Aorta (tissue), 5 donors: ENCODE measurements at regions of chr6 and their contacts with region 1.

Region 1: GRCh38 chr6:154733012-154733625 is at the start of gene SCAF8:
- DNase-seq: peak; percentile 86 to 95
- ATAC-seq: peak; percentile 97
- H3K4me3 ChIP-seq: peak within 1 kb of the TSS; percentile 87 to 94
- H3K27ac ChIP-seq: peak within 1 kb of the TSS; percentile 75 to 84
- H3K4me1 ChIP-seq: no peaks in the 10 kb centered on the region
- H3K27me3 ChIP-seq: no peaks in the 10 kb centered on the region
- total RNA-seq, gene SCAF8: 47.0 to 52.3 TPM

Region 2: DNA sequence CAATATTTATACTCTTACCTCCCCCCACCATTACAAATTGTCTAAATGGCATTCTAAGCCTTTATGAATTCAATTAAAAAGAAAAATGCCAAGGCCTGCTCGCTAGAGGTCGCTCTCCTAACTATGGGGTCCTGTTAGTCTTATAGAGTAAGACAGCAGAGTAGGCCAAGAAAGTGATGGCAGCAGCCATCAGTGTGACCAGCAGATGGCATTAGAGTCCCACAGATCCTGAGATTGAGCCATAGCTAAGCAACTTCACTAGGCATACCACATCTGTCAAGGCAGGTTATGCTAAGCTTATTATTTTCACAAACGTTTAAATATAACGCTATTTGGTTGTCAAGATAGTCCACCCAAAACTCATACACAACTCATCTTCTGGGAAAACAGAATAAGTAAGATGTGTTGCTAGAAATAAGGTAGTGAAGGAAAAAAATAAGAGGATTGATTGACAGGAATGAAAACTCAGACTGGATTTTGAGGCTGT is 57.5 kb before region 1 on chr6:
- intact Hi-C with region 1: loop called (anchors 5 kb)
- DNase-seq: peak; percentile 91 to 92
- ATAC-seq: peak; percentile 97
- H3K4me3 ChIP-seq: no peak overlapping the region
- H3K27ac ChIP-seq: no peak overlapping the region
- H3K4me1 ChIP-seq: no peaks in the 10 kb centered on the region
- H3K27me3 ChIP-seq: no peaks in the 10 kb centered on the region

Region 3: DNA sequence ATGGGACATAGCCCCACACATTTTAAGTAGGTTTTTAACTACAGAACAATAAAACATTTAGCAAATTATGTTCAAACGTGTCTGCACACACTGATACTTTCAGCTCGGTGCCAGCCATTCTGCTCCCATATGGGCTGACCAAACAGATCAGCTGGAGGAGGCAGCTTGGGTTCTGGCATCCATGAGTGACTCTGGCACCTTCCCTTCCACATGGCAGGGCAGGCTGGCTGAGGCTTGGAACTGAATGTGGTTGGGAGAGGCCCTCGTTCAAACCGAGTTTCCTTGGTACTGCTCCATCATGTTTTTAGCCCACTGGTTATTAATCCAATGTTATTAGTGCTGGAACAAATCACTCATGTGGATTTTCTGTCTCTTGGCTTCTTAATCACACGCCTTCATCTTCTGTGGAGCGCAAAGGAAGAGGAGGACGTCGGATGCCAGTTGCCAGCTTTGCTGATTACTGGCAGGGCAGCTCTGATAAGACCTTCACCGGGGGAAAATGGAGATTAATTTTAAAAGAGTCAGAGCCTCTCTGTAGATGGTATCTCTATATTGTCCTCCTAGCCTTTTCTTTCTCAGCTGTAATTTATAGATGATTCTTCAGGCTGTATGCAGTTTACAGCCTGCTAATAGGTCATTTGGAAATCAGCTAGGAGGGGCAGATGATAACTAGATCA is 168.9 kb after region 1 on chr6:
- intact Hi-C with region 1: no loop called
- DNase-seq: no peak
- ATAC-seq: no peak
- H3K4me3 ChIP-seq: no peak overlapping the region
- H3K27ac ChIP-seq: no peak overlapping the region
- H3K4me1 ChIP-seq: no peaks in the 10 kb centered on the region
- H3K27me3 ChIP-seq: no peaks in the 10 kb centered on the region

Region 4: DNA sequence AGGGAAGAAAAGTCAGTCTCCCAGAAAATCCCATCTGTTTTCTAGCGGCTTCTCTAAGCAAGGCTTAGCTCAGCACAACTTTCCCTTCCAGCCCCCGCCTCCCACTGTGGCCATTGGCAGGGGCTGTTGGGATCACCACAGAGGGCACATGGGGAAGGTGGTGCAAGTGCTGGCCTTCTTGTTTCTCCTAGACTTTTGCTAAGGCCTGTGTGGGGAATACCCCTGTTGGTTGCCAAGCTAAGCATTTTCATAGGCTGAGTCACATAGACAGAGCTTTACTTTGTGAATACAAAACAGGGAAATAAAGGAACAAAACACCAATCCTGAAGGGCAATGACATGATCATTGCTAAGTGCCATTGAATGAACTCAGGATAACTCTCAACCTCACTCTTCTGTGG is 229.6 kb after region 1 on chr6:
- intact Hi-C with region 1: no loop called
- DNase-seq: peak in 1 of 2 donors; percentile 57
- ATAC-seq: peak; percentile 54
- H3K4me3 ChIP-seq: no peak overlapping the region
- H3K27ac ChIP-seq: no peak overlapping the region
- H3K4me1 ChIP-seq: no peaks in the 10 kb centered on the region
- H3K27me3 ChIP-seq: no peaks in the 10 kb centered on the region